ENCODE measurements at regions of chr5 and their contacts with region 1.

Region 1: DNA sequence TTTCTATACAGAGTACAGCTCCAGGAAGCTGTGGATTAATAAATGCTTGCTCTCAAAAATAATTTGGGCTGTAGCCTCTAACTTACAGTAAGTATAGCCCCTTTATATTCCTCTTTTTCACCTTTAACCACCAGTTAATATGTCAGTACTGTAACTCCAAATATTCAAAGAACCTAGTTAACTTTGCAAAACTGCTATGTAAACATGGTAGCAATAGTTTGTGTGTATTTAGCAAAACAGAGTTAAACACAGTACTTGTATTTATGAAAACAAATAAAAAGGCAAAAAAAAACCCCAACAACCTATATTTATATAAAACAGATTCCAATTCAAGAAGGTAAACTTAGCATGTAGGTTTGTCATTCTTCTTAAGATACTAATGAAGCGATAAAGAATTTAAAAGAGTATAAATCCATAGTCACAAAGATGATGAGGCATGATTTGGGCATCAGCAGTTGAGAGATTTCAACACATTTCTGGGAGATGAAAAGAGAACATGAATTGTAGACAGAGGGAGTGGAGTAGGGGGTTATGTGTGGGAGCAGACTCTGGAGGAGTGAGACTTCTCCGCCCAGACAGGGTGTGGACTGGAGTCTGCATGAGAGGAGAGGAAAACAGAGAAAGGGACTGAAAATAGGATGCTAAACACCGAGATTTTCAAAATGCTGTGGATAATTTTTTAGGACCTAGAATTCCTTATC is 47.0 kb upstream of the F2RL1 start:
- DNase-seq: no peak
- H3K4me3 Mint-ChIP-seq: no peak overlapping the region
- H3K27ac Mint-ChIP-seq: peak overlapping the region; percentile 8
- H3K4me1 Mint-ChIP-seq: peaks cover 9% of the 10 kb centered on the region
- H3K27me3 Mint-ChIP-seq: no peaks in the 10 kb centered on the region
- CTCF ChIP-seq: no peak

Region 2: DNA sequence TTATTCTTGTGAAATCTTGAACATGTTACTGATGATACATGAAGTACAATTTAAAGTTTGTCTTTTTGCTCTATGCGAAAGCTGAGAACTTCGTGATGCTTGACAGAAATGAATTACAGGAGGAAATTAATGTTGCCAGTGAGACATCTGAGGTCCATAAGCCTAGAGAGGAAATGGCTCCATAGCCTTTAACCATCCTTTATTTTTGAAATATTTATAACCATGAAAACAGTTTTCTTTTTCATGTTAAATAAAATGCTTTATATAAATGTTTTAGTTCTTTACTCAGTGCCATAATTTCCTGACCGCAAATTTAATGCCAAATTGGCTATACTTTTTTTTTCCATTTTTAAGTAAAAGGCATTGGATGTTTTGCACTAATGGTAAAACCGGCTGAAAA is 177.7 kb before region 1 on chr5:
- CTCF ChIA-PET with region 1: interaction called, 281 read pairs
- POLR2A ChIA-PET with region 1: interaction called, 10 read pairs
- intact Hi-C with region 1: no loop called
- DNase-seq: no peak
- H3K4me3 Mint-ChIP-seq: no peak overlapping the region
- H3K27ac Mint-ChIP-seq: no peak overlapping the region
- H3K4me1 Mint-ChIP-seq: no peaks in the 10 kb centered on the region
- H3K27me3 Mint-ChIP-seq: peaks cover 51% of the 10 kb centered on the region
- CTCF ChIP-seq: no peak

Region 3: DNA sequence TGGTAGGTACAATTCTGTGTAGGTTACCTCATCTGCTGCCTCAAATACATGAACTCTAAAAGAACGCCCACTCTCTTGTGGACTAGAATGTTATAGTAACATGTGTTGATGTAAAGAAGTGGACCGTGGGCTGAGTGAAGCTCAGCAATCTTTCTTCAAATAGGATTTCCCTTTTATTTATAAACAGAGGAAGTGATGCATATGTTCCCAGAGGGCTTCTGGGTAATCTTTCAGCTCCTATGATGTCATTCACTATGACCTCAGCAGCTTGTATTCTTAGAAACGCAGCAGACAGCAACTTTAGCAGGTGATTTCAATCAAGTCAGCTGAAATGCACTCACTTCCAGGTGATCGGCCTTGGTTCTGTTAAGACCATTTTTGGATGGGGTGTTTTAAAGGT is 163.0 kb before region 1 on chr5:
- CTCF ChIA-PET with region 1: interaction called, 281 read pairs
- POLR2A ChIA-PET with region 1: no interaction called
- intact Hi-C with region 1: no loop called
- DNase-seq: no peak
- H3K4me3 Mint-ChIP-seq: no peak overlapping the region
- H3K27ac Mint-ChIP-seq: no peak overlapping the region
- H3K4me1 Mint-ChIP-seq: peaks cover 6% of the 10 kb centered on the region
- H3K27me3 Mint-ChIP-seq: no peaks in the 10 kb centered on the region
- CTCF ChIP-seq: no peak

Region 4: GRCh38 chr5:76641514-76642120 is 130.2 kb before region 1 on chr5:
- CTCF ChIA-PET with region 1: interaction called, 8 read pairs
- POLR2A ChIA-PET with region 1: no interaction called
- intact Hi-C with region 1: loop called (anchors 1 kb)
- DNase-seq: peak; percentile 83
- H3K4me3 Mint-ChIP-seq: no peak overlapping the region
- H3K27ac Mint-ChIP-seq: no peak overlapping the region
- H3K4me1 Mint-ChIP-seq: peaks cover 17% of the 10 kb centered on the region
- H3K27me3 Mint-ChIP-seq: no peaks in the 10 kb centered on the region
- CTCF ChIP-seq: peak; percentile 57

Region 5: GRCh38 chr5:76701298-76701697 is 70.6 kb before region 1 on chr5:
- CTCF ChIA-PET with region 1: interaction called, 10 read pairs
- POLR2A ChIA-PET with region 1: no interaction called
- intact Hi-C with region 1: no loop called
- DNase-seq: peak; percentile 99
- H3K4me3 Mint-ChIP-seq: no peak overlapping the region
- H3K27ac Mint-ChIP-seq: peak overlapping the region; percentile 88
- H3K4me1 Mint-ChIP-seq: peaks cover 27% of the 10 kb centered on the region
- H3K27me3 Mint-ChIP-seq: no peaks in the 10 kb centered on the region
- CTCF ChIP-seq: no peak

Region 6: GRCh38 chr5:76720988-76721569 is 50.8 kb before region 1 on chr5:
- CTCF ChIA-PET with region 1: interaction called, 32 read pairs
- POLR2A ChIA-PET with region 1: interaction called, 4 read pairs
- intact Hi-C with region 1: loop called (anchors 5 kb)
- DNase-seq: no peak
- H3K4me3 Mint-ChIP-seq: no peak overlapping the region
- H3K27ac Mint-ChIP-seq: no peak overlapping the region
- H3K4me1 Mint-ChIP-seq: peaks cover 25% of the 10 kb centered on the region
- H3K27me3 Mint-ChIP-seq: no peaks in the 10 kb centered on the region
- CTCF ChIP-seq: no peak

Region 7: GRCh38 chr5:76818844-76819831 is 47.3 kb after region 1 on chr5 and contains the start of gene F2RL1:
- CTCF ChIA-PET with region 1: interaction called, 12 read pairs
- POLR2A ChIA-PET with region 1: interaction called, 5 read pairs
- intact Hi-C with region 1: loop called (anchors 5 kb)
- DNase-seq: peak; percentile 94
- H3K4me3 Mint-ChIP-seq: peak within 1 kb of the TSS; percentile 91
- H3K27ac Mint-ChIP-seq: peak within 1 kb of the TSS; percentile 79
- H3K4me1 Mint-ChIP-seq: peaks cover 30% of the 10 kb centered on the region
- H3K27me3 Mint-ChIP-seq: no peaks in the 10 kb centered on the region
- CTCF ChIP-seq: no peak
- total RNA-seq, gene F2RL1: 30.7 and 34.9 TPM in 2 replicates

Region 8: DNA sequence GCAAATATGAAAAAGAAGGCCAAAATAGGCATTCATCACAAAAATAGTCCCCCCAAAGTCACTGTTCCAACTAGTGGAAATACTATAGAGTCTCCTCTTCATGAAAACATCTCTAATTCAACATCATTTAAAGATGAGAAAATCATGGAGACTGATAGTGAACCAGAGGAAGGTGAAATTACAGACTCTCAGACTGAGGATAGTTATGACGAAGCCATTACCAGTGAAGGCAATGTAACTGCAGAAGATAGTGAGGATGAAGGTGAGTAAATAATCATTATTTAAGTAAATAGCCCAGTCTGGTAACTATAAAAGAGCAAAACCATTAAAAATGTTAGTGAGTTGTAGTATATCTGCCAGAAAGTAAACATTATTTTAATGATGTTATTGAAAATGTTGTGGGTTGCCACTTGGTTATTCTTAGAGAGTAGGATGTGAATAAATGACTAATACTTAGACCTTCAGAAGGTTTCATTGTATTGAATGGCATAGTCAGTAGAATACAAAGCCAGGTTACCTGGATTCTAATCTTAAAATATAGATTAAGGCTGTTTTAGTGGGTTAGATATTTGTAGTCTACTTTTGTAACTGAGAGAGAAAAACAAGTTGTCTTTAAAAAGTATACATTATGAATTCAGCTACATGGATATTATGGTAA is 274.7 kb after region 1 on chr5:
- CTCF ChIA-PET with region 1: no interaction called
- POLR2A ChIA-PET with region 1: no interaction called
- intact Hi-C with region 1: no loop called
- DNase-seq: no peak
- H3K4me3 Mint-ChIP-seq: no peak overlapping the region
- H3K27ac Mint-ChIP-seq: no peak overlapping the region
- H3K4me1 Mint-ChIP-seq: peaks cover 6% of the 10 kb centered on the region
- H3K27me3 Mint-ChIP-seq: no peaks in the 10 kb centered on the region
- CTCF ChIP-seq: no peak